Activated CD4-positive, alpha-beta memory T cell treated with anti-CD3 and anti-CD28 coated beads for 36 hours (primary cell): ENCODE measurements at regions of chr12 and their contacts with region 1.

Region 1: DNA sequence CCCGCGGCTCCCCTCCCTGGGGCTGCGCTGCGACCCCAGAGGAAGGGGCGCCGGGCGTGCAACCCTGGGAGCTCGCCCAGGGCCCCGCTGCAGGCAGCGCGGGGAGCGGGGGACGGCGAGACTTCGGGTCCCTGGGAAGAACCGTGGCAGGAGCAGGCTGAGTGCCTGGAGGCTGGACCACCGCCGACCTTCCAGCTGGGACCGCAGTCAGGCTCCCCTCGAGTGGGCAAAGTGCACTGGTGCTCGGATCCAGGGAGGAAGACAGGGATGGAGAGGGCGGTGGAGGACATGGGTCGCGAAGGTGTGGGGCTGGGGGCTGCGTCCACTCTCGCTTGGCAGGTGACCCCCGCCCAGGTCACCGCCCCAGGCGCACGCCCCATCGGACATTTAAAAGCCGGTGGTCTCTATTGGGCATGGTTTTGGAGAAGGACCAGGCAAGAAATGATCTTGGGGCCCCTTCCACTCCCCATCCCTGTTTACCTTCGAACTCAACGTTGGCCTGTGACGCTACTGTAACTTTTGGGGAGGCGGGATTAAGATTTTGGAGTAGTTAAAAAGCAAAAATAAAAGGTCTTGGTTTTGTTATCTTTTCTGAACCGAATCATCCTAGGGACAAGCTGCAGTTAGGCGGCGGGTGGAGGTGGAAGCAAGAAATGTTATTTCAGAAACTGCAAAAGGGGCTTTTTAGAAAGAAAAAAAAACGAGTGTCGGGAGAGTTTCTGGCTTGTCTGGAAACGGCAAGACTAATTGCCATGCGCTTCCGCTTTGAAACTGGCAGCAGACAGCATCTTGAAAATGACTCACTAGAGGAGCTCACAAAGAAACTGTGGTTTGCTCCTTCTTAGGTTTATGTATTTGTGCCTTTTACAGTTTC is 1.0 kb downstream of the ELK3 start:
- DNase-seq: peak; percentile 87
- H3K4me3 Mint-ChIP-seq: peak overlapping the region; percentile 93
- H3K27ac Mint-ChIP-seq: peak overlapping the region; percentile 99
- H3K4me1 Mint-ChIP-seq: peaks cover 45% of the 10 kb centered on the region
- H3K27me3 Mint-ChIP-seq: no peaks in the 10 kb centered on the region

Region 2: DNA sequence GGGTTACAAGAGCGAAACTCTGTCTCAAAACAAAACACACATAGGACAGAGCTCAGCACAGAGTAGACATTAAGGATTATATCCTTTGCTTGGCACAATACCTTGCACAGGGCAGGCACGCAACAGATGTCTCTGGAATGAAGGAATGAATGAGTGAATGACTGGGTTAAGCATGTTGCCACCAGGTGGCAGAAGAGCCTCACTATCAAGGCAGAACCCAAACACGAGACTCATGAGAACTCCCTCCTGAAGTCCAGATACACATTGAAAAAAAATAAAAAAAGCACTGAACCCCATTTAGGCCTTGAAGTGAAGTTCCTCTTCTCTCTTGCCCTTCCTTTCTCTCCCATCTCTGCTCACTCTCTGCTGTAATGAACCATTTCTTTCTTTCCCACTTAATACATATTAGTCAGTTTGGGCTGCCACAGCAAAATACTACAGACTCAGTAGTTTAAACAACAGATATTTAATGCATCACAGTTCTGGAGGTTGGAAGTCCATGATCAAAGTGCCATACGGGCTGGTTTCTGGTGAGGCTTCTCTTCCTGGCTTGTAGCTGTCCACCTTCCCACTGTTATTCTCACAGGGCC is 133.2 kb before region 1 on chr12:
- CTCF ChIA-PET with region 1: interaction called, 3 read pairs
- POLR2A ChIA-PET with region 1: no interaction called
- intact Hi-C with region 1: loop called (anchors 5 kb)
- DNase-seq: peak; percentile 83
- H3K4me3 Mint-ChIP-seq: no peak overlapping the region
- H3K27ac Mint-ChIP-seq: no peak overlapping the region
- H3K4me1 Mint-ChIP-seq: peaks cover 26% of the 10 kb centered on the region
- H3K27me3 Mint-ChIP-seq: no peaks in the 10 kb centered on the region

Region 3: DNA sequence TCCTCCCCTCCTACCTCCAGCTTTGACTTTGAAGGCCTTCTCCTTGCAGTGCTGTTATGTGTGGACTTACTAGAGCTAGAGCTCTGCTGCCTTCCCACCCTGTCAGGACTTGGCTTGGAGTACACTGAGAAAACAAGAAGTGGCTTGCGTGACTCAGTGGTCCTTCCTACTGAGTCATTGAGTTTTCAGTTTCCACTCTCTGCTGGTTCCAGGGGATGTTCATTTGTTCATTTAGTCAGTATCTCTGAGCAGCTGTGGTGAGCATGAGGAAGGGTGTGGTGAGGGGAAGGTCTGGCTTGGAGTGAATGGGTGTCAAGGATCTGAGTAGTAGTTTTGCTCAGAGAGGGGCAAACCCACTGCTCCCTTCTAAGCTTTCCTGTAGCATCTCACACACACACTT is 18.2 kb before region 1 on chr12:
- CTCF ChIA-PET with region 1: interaction called, 4 read pairs
- POLR2A ChIA-PET with region 1: interaction called, 38 read pairs
- intact Hi-C with region 1: loop called (anchors 1 kb)
- DNase-seq: peak; percentile 90
- H3K4me3 Mint-ChIP-seq: peak overlapping the region; percentile 10
- H3K27ac Mint-ChIP-seq: peak overlapping the region; percentile 83
- H3K4me1 Mint-ChIP-seq: peaks cover 24% of the 10 kb centered on the region
- H3K27me3 Mint-ChIP-seq: no peaks in the 10 kb centered on the region

Region 4: GRCh38 chr12:96219698-96220206 is 24.5 kb after region 1 on chr12:
- CTCF ChIA-PET with region 1: interaction called, 9 read pairs
- POLR2A ChIA-PET with region 1: no interaction called
- intact Hi-C with region 1: loop called (anchors 1 kb)
- DNase-seq: peak; percentile 36
- H3K4me3 Mint-ChIP-seq: no peak overlapping the region
- H3K27ac Mint-ChIP-seq: peak overlapping the region; percentile 14
- H3K4me1 Mint-ChIP-seq: peaks cover 53% of the 10 kb centered on the region
- H3K27me3 Mint-ChIP-seq: no peaks in the 10 kb centered on the region

Region 5: DNA sequence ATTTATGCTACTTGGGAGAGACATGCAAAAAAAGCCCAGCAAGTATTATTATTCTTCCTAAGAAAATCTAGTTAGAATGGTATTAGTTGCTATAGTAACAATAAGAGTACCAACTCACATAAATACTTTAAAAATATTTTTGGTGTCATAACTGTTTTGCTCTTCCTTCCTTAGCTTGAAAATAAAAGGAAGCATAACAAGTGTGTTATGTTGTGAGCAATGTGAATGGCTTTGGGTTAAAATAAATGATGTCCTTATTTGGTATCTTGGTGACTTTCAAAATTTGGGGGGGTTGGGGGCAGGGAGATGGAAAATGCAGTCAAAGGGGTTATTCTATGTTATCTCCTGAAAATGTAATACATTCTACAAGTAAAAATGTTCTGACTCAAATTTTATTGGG is 90.0 kb after region 1 on chr12:
- CTCF ChIA-PET with region 1: no interaction called
- POLR2A ChIA-PET with region 1: no interaction called
- intact Hi-C with region 1: no loop called
- DNase-seq: no peak
- H3K4me3 Mint-ChIP-seq: no peak overlapping the region
- H3K27ac Mint-ChIP-seq: no peak overlapping the region
- H3K4me1 Mint-ChIP-seq: peaks cover 11% of the 10 kb centered on the region
- H3K27me3 Mint-ChIP-seq: no peaks in the 10 kb centered on the region

Region 6: GRCh38 chr12:96434107-96434506 is 238.9 kb after region 1 on chr12:
- CTCF ChIA-PET with region 1: no interaction called
- POLR2A ChIA-PET with region 1: no interaction called
- intact Hi-C with region 1: loop called (anchors 1 kb)
- DNase-seq: peak; percentile 88
- H3K4me3 Mint-ChIP-seq: peak overlapping the region; percentile 4
- H3K27ac Mint-ChIP-seq: peak overlapping the region; percentile 68
- H3K4me1 Mint-ChIP-seq: peaks cover 31% of the 10 kb centered on the region
- H3K27me3 Mint-ChIP-seq: no peaks in the 10 kb centered on the region

Region 7: DNA sequence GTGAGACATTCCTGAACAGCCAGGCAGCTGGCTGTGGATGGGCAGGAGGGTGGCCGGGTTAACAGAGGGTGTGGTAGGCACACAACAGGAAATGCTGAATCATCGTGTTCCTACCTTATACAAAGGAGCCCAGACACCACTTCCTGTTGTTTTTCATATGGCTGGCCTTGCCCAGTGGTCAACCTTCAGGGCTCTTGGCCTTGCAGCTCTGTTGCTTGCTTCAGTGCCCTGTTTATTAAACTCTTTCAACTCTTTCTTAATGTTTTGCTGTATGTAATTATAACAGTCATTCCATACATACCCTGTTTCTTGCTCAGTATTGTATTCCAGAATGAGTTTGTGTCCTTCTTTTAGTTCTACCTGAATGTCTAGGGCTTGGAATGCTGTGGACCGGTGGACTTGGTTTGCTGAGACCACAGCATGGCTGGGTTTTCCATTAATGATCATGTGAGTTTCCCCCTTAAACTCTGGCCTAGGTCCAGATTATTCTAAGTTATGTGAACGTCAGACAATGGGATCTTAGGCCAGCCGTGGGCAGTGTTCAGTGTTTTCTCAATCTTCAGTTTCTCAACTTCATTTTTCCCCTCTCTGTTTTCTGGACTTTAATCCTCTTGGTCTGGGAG is 306.0 kb after region 1 on chr12:
- CTCF ChIA-PET with region 1: no interaction called
- POLR2A ChIA-PET with region 1: no interaction called
- intact Hi-C with region 1: loop called (anchors 1 kb)
- DNase-seq: peak; percentile 56
- H3K4me3 Mint-ChIP-seq: no peak overlapping the region
- H3K27ac Mint-ChIP-seq: peak overlapping the region; percentile 84
- H3K4me1 Mint-ChIP-seq: peaks cover 39% of the 10 kb centered on the region
- H3K27me3 Mint-ChIP-seq: no peaks in the 10 kb centered on the region